Left cardiac atrium (tissue), 4 donors: ENCODE measurements at regions of chr18 and their contacts with region 1.

Region 1: GRCh38 chr18:28176933-28177827 is at the start of gene CDH2:
- DNase-seq: peak; percentile 55
- ATAC-seq: peak; percentile 67 to 73
- total RNA-seq, gene CDH2: 110 to 178 TPM

Region 2: GRCh38 chr18:28108814-28109213 is 68.4 kb before region 1 on chr18:
- intact Hi-C with region 1: loop called in 1 of 2 experiments (anchors 5 kb)
- DNase-seq: no peak
- ATAC-seq: no peak

Region 3: GRCh38 chr18:28127763-28128663 is 49.2 kb before region 1 on chr18:
- intact Hi-C with region 1: loop called in 1 of 2 experiments (anchors 10 kb)
- DNase-seq: no peak
- ATAC-seq: peak in 1 of 2 donors; percentile 51